ENCODE measurements at regions of chr19 and their contacts with region 1.

Region 1: GRCh38 chr19:38049105-38049649 is 142.2 kb downstream of the SIPA1L3 start:
- DNase-seq: peak; percentile 20 to 87 (median 82)
- ATAC-seq: peak; percentile 89
- H3K4me3 ChIP-seq: peak overlapping the region; percentile 19
- H3K4me3 Mint-ChIP-seq: peak overlapping the region; percentile 71 to 91 (median 85)
- H3K27ac ChIP-seq: peak overlapping the region; percentile 74
- H3K27ac Mint-ChIP-seq: peak overlapping the region; percentile 94 to 100 (median 97)
- H3K4me1 ChIP-seq: peaks cover 20 to 36% of the 10 kb centered on the region in 2 donors
- H3K4me1 Mint-ChIP-seq: peaks cover 22 to 56% (median 44%) of the 10 kb centered on the region in 7 donors
- H3K27me3 ChIP-seq: no peaks in the 10 kb centered on the region
- H3K27me3 Mint-ChIP-seq: peaks cover 0 to 2% (median 0%) of the 10 kb centered on the region in 5 donors

Region 2: DNA sequence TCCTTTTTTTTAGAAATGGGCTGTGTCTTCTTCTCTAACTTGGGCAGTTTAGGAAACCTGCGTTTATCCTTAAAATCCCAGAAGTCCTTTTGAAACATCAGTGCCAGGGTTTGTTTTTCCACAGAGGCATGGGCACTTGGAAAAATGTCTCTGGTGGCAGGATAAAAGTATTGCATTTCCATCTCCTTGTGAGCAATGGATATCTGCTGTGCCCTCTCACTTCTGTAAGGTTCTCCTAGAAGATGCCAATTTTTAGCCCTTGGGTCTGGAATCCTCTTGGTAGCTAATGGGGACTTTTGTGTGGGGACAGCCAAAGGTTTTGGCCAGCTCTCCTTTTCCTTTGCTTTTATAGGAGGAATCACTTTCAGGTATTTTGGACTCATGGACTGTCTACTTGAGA is 163.8 kb before region 1 on chr19:
- CTCF ChIA-PET with region 1: no interaction called
- POLR2A ChIA-PET with region 1: no interaction called
- intact Hi-C with region 1: no loop called
- DNase-seq: no peak
- ATAC-seq: no peak
- H3K4me3 ChIP-seq: no peak overlapping the region
- H3K4me3 Mint-ChIP-seq: no peak overlapping the region
- H3K27ac ChIP-seq: no peak overlapping the region
- H3K27ac Mint-ChIP-seq: no peak overlapping the region
- H3K4me1 ChIP-seq: no peaks in the 10 kb centered on the region
- H3K4me1 Mint-ChIP-seq: no peaks in the 10 kb centered on the region
- H3K27me3 ChIP-seq: no peaks in the 10 kb centered on the region
- H3K27me3 Mint-ChIP-seq: peaks cover 0 to 4% (median 0%) of the 10 kb centered on the region in 5 donors

Region 3: DNA sequence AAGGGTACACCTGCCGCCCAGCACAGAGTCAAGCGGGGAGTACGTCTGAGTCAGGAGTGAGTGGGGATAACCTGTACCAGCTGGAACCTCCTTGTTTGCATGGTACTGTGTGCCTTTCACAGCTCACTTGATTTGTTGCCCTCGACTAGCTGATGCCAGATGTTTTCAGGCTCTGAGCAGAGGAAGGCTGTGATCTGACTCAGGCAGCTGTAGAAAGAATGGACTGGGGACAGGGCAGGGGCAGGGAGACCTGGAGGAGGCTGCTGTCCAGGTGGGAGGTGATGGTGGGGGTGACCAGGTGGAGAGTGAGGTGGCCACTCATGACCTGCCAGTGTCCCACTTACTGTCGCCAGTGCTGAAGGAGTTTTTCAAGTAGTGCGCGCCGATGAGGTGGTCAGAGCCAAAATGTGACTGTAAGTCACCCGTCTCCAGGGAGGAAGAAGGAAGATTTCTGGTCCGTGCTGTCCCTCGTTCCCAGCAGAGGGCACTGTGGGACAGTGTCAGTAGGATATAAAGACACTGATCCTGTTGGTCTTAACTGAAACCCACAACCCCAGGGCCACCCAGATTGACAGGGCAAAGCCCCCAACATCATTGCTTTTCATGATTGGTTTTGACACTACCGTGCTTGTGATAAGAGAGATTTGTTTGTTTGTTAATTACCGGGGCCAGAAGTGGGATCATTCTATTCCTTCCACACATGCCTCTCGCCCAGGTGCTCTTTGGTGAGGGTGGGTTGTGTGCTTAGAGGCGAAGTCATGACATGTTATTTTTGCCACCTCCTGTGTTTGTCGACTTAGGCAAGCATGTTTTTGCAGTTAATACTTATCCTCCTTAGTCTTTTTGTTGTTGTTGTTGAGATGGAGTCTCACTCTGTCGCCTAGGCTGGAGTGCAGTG is 46.5 kb after region 1 on chr19:
- CTCF ChIA-PET with region 1: interaction called, 3 read pairs
- POLR2A ChIA-PET with region 1: no interaction called
- intact Hi-C with region 1: loop called in 1 of 2 experiments (anchors 2 kb)
- DNase-seq: peak; percentile 7 to 49 (median 37)
- ATAC-seq: peak; percentile 79
- H3K4me3 ChIP-seq: no peak overlapping the region
- H3K4me3 Mint-ChIP-seq: no peak overlapping the region
- H3K27ac ChIP-seq: no peak overlapping the region
- H3K27ac Mint-ChIP-seq: peak overlapping the region in 6 of 9 donors; percentile 19 to 80 (median 46)
- H3K4me1 ChIP-seq: no peaks in the 10 kb centered on the region
- H3K4me1 Mint-ChIP-seq: peaks cover 0 to 8% (median 4%) of the 10 kb centered on the region in 7 donors
- H3K27me3 ChIP-seq: no peaks in the 10 kb centered on the region
- H3K27me3 Mint-ChIP-seq: no peaks in the 10 kb centered on the region

Region 4: GRCh38 chr19:38229585-38230073 is 180.5 kb after region 1 on chr19:
- CTCF ChIA-PET with region 1: no interaction called
- POLR2A ChIA-PET with region 1: no interaction called
- intact Hi-C with region 1: loop called in 1 of 2 experiments (anchors 5 kb)
- DNase-seq: peak in 8 of 9 donors; percentile 20 to 75 (median 41)
- ATAC-seq: peak; percentile 91
- H3K4me3 ChIP-seq: no peak overlapping the region
- H3K4me3 Mint-ChIP-seq: peak overlapping the region; percentile 7 to 77 (median 54)
- H3K27ac ChIP-seq: no peak overlapping the region
- H3K27ac Mint-ChIP-seq: no peak overlapping the region
- H3K4me1 ChIP-seq: peaks cover 0 to 7% of the 10 kb centered on the region in 2 donors
- H3K4me1 Mint-ChIP-seq: peaks cover under 1 to 20% (median 15%) of the 10 kb centered on the region in 7 donors
- H3K27me3 ChIP-seq: peaks cover 5 to 16% of the 10 kb centered on the region in 2 donors
- H3K27me3 Mint-ChIP-seq: peaks cover 45 to 66% (median 57%) of the 10 kb centered on the region in 5 donors